ENCODE measurements at regions of chr17 and their contacts with region 1.

Region 1: GRCh38 chr17:62065598-62066468 is 755 bp upstream of the MED13 start:
- DNase-seq: peak; percentile 98 to 99 (median 98)
- ATAC-seq: peak; percentile 96
- H3K4me3 ChIP-seq: peak overlapping the region; percentile 86
- H3K27ac ChIP-seq: peak overlapping the region; percentile 99
- H3K4me1 ChIP-seq: peaks cover 4 to 10% of the 10 kb centered on the region in 2 experiments; a peak in 3 of 5 replicates
- H3K27me3 ChIP-seq: no peaks in the 10 kb centered on the region
- CTCF ChIP-seq: peak; percentile 85 to 94 (median 91)
- EP300 ChIP-seq: no peak; the same call in 1 of the 2 replicates
- POLR2A ChIP-seq: peak; percentile 95
- RAD21 ChIP-seq: peak; percentile 55 to 67

Region 2: GRCh38 chr17:61635913-61636432 is 429.9 kb before region 1 on chr17:
- CTCF ChIA-PET with region 1: no interaction called
- POLR2A ChIA-PET with region 1: no interaction called
- in situ Hi-C with region 1: no loop called
- intact Hi-C with region 1: loop called (anchors 1 kb)
- DNase-seq: peak; percentile 14 to 68 (median 16)
- ATAC-seq: peak; percentile 54; the same call in 1 of the 3 replicates
- H3K4me3 ChIP-seq: no peak overlapping the region
- H3K27ac ChIP-seq: no peak overlapping the region
- H3K4me1 ChIP-seq: no peaks in the 10 kb centered on the region
- H3K27me3 ChIP-seq: no peaks in the 10 kb centered on the region; a peak in 1 of 5 replicates
- CTCF ChIP-seq: peak; percentile 66 to 78 (median 71); a peak in 5 of 6 replicates
- EP300 ChIP-seq: no peak
- POLR2A ChIP-seq: no peak
- RAD21 ChIP-seq: peak; percentile 74 to 93

Region 3: GRCh38 chr17:62052757-62053338 is 13.0 kb before region 1 on chr17:
- CTCF ChIA-PET with region 1: no interaction called
- POLR2A ChIA-PET with region 1: interaction called, 16 read pairs
- in situ Hi-C with region 1: no loop called
- intact Hi-C with region 1: no loop called
- DNase-seq: no peak
- ATAC-seq: no peak
- H3K4me3 ChIP-seq: no peak overlapping the region
- H3K27ac ChIP-seq: no peak overlapping the region
- H3K4me1 ChIP-seq: no peaks in the 10 kb centered on the region
- H3K27me3 ChIP-seq: no peaks in the 10 kb centered on the region
- CTCF ChIP-seq: no peak
- EP300 ChIP-seq: no peak
- POLR2A ChIP-seq: no peak
- RAD21 ChIP-seq: no peak

Region 4: DNA sequence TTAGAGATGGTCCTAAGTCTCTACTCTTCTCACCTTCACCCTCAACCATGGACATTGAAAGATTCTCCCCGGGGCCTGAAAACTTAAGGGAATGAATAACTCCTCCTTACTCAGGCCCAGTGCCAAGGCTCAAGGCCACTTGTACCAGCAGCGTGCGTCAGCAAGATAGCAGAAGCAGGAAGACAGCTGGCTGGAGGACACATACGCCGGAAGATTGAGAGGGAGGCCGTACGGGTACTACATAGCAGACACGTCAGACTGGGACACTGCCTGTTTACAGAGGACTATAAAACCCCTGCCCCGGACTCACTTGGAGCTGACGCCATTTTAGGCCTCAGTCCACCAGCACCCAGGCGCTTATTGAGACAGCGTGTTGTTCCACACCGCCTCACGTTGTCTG is 75.0 kb after region 1 on chr17:
- CTCF ChIA-PET with region 1: no interaction called
- POLR2A ChIA-PET with region 1: no interaction called
- in situ Hi-C with region 1: no loop called
- intact Hi-C with region 1: no loop called
- DNase-seq: no peak
- ATAC-seq: no peak
- H3K4me3 ChIP-seq: no peak overlapping the region
- H3K27ac ChIP-seq: no peak overlapping the region
- H3K4me1 ChIP-seq: peaks cover 17 to 18% of the 10 kb centered on the region in 2 experiments; a peak in 4 of 5 replicates
- H3K27me3 ChIP-seq: no peaks in the 10 kb centered on the region
- CTCF ChIP-seq: no peak
- EP300 ChIP-seq: no peak
- POLR2A ChIP-seq: no peak
- RAD21 ChIP-seq: no peak

Measured in K562 (cell line).